ENCODE measurements at regions of chr4 and their contacts with region 1.

Region 1: DNA sequence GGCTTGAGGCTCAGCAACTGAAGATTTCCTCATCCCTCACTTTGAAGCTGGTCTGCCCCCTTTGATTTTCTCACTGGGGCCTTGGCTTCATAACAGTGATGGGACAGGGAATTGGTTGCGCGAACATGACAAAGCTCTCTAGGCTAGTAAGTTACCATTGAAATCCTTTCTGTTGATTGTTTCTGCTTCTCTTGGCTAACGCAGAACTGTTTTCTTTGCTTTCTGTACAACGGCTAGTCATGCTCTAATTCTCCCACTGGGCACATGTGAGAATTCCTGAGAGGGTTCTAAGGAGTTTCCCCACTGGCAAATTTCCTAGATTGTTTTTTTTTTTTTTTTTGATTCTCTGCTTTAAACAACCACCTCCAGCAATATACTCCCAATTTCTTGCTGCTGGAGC is 738.6 kb downstream of the PCDH7 start:
- DNase-seq: no peak
- ATAC-seq: no peak
- H3K4me3 ChIP-seq: no peak overlapping the region
- H3K4me3 Mint-ChIP-seq: no peak overlapping the region
- H3K27ac ChIP-seq: no peak overlapping the region
- H3K27ac Mint-ChIP-seq: no peak overlapping the region
- H3K4me1 ChIP-seq: no peaks in the 10 kb centered on the region
- H3K4me1 Mint-ChIP-seq: peaks cover 0 to 3% (median 0%) of the 10 kb centered on the region in 7 donors
- H3K27me3 ChIP-seq: no peaks in the 10 kb centered on the region
- H3K27me3 Mint-ChIP-seq: no peaks in the 10 kb centered on the region

Region 2: GRCh38 chr4:30989508-30989907 is 469.3 kb before region 1 on chr4:
- CTCF ChIA-PET with region 1: no interaction called
- POLR2A ChIA-PET with region 1: no interaction called
- intact Hi-C with region 1: loop called in 1 of 2 experiments (anchors 5 kb)
- DNase-seq: no peak
- ATAC-seq: no peak
- H3K4me3 ChIP-seq: no peak overlapping the region
- H3K4me3 Mint-ChIP-seq: no peak overlapping the region
- H3K27ac ChIP-seq: no peak overlapping the region
- H3K27ac Mint-ChIP-seq: no peak overlapping the region
- H3K4me1 ChIP-seq: no peaks in the 10 kb centered on the region
- H3K4me1 Mint-ChIP-seq: no peaks in the 10 kb centered on the region
- H3K27me3 ChIP-seq: no peaks in the 10 kb centered on the region
- H3K27me3 Mint-ChIP-seq: no peaks in the 10 kb centered on the region

Measured in naive thymus-derived CD4-positive, alpha-beta T cell (primary cell).